Common myeloid progenitor, CD34-positive (primary cell): ENCODE measurements at regions of chr6 and their contacts with region 1.

Region 1: DNA sequence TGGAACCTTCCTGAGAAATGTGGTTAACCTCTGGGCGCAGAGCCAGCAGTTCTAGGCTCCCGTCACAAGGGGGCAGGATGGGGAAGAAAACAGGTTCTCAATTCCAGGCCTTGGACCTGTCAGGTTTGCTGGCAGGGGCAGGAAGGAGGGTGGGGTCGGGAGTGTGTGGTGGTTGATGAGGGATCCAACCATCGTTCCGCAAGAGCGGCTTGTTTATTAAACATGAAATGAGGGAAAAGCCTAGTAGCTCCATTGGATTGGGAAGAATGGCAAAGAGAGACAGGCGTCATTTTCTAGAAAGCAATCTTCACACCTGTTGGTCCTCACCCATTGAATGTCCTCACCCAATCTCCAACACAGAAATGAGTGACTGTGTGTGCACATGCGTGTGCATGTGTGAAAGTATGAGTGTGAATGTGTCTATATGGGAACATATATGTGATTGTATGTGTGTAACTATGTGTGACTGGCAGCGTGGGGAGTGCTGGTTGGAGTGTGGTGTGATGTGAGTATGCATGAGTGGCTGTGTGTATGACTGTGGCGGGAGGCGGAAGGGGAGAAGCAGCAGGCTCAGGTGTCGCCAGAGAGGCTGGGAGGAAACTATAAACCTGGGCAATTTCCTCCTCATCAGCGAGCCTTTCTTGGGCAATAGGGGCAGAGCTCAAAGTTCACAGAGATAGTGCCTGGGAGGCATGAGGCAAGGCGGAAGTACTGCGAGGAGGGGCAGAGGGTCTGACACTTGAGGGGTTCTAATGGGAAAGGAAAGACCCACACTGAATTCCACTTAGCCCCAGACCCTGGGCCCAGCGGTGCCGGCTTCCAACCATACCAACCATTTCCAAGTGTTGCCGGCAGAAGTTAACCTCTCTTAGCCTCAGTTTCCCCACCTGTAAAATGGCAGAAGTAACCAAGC is 29.6 kb downstream of the SRSF3 start:
- DNase-seq: peak; percentile 75 to 85 (median 75)
- H3K4me3 ChIP-seq: no peak overlapping the region
- H3K27ac ChIP-seq: no peak overlapping the region
- H3K4me1 ChIP-seq: peaks cover 5 to 34% (median 22%) of the 10 kb centered on the region in 4 experiments
- H3K27me3 ChIP-seq: no peaks in the 10 kb centered on the region

Region 2: DNA sequence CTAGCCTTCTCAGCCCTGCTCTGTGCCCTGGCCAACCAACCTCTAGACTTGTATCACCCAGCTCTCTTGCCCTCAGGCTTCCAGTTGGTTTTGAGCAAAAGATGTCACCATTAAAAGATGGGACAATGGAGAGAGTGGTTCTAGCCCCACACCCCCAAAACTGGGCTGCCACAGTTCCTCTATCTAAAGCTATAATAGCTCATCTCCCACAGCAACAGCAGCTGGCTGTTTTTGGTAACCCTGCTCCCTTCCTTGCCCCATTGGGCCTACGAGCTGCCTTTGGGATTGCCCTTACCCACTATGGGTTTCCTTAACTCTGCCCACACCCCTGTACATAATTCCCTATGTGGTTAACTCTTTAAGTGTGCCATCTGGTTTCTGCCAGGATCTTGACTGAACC is 37.2 kb before region 1 on chr6:
- CTCF ChIA-PET with region 1: no interaction called
- POLR2A ChIA-PET with region 1: no interaction called
- DNase-seq: no peak
- H3K4me3 ChIP-seq: no peak overlapping the region
- H3K27ac ChIP-seq: no peak overlapping the region
- H3K4me1 ChIP-seq: peaks cover 0 to 3% (median 0%) of the 10 kb centered on the region in 4 experiments
- H3K27me3 ChIP-seq: peaks cover 0 to 2% (median 0%) of the 10 kb centered on the region in 5 experiments

Region 3: GRCh38 chr6:36636283-36636682 is 12.5 kb after region 1 on chr6:
- CTCF ChIA-PET with region 1: interaction called, 17 read pairs
- POLR2A ChIA-PET with region 1: no interaction called
- DNase-seq: no peak
- H3K4me3 ChIP-seq: no peak overlapping the region
- H3K27ac ChIP-seq: no peak overlapping the region
- H3K4me1 ChIP-seq: peaks cover 0 to 20% (median 10%) of the 10 kb centered on the region in 4 experiments
- H3K27me3 ChIP-seq: no peaks in the 10 kb centered on the region

Region 4: GRCh38 chr6:36678518-36679027 is 54.8 kb after region 1 on chr6 and contains the start of gene CDKN1A:
- CTCF ChIA-PET with region 1: interaction called, 10 read pairs
- POLR2A ChIA-PET with region 1: interaction called, 3 read pairs
- DNase-seq: peak; percentile 70 to 86 (median 84)
- H3K4me3 ChIP-seq: peak within 1 kb of the TSS; percentile 23 to 87 (median 76)
- H3K27ac ChIP-seq: peak within 1 kb of the TSS in 1 of 2 experiments; percentile 49
- H3K4me1 ChIP-seq: peaks cover 10 to 68% (median 44%) of the 10 kb centered on the region in 4 experiments
- H3K27me3 ChIP-seq: peaks cover 0 to 32% (median 0%) of the 10 kb centered on the region in 5 experiments

Region 5: DNA sequence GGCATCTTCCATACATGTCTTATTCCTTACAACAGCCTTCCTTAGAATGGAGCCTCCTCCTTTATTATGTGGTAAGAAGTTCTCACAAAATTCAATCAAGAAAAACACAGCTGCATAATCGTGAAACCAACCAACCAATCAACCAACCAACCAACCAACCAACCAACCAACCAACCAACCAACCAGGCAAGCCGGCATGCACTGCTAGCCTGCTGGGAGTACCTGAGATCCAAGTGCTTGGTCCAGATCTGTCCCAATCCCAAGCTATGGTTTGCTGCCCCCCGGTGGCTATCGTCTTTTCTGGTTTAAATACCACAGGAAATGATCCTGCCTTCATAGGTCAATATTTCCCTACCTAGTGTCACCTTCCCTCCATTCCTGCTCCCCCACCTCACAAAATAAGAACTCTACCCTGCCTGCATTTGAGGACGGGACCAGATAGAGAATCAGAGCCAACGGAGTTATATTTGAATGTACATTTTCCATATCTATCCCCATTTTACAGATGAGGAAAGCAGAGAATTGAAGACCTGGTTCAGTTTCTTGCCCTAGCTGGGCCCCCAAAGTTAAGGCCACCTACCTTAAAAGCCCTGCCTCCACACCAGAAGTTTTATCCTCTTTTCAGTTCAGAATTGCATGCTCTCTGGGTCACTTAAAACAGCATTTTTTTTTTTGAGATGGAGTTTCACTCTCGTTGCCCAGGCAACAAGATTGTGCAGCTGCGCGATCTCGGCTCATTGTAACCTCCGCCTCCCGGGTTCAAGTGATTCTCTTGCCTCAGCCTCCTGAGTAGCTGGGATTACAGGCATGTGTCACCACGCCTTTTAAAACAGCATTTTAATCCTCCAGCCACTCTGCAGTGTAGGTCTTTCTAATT is 100.9 kb after region 1 on chr6:
- CTCF ChIA-PET with region 1: interaction called, 10 read pairs
- POLR2A ChIA-PET with region 1: no interaction called
- DNase-seq: peak; percentile 47 to 61 (median 50)
- H3K4me3 ChIP-seq: no peak overlapping the region
- H3K27ac ChIP-seq: no peak overlapping the region
- H3K4me1 ChIP-seq: peaks cover 0 to 17% (median 0%) of the 10 kb centered on the region in 4 experiments
- H3K27me3 ChIP-seq: no peaks in the 10 kb centered on the region

Region 6: GRCh38 chr6:36759148-36759759 is 135.5 kb after region 1 on chr6:
- CTCF ChIA-PET with region 1: interaction called, 71 read pairs
- POLR2A ChIA-PET with region 1: no interaction called
- DNase-seq: peak; percentile 67 to 82 (median 77)
- H3K4me3 ChIP-seq: no peak overlapping the region
- H3K27ac ChIP-seq: no peak overlapping the region
- H3K4me1 ChIP-seq: peaks cover 0 to 24% (median under 1%) of the 10 kb centered on the region in 4 experiments
- H3K27me3 ChIP-seq: no peaks in the 10 kb centered on the region